Activated T-helper 2 cell treated with anti-CD3 and anti-CD28 coated beads, Interferon-gamma antibody, Interleukin-2, Interleukin-4, amounts not matched to agents 10 μg/mL and 5 μg/mL and 100 μg/mL, durations not matched to agents 14 hours and 24 hours and 36 hours (primary cell): ENCODE measurements at regions of chr16 and their contacts with region 1.

Region 1: GRCh38 chr16:67806428-67807147 is at the starts of genes RANBP10 and TSNAXIP1:
- DNase-seq: peak; percentile 97
- H3K4me3 Mint-ChIP-seq: peak within 1 kb of the TSS; percentile 95
- H3K27ac Mint-ChIP-seq: peak within 1 kb of the TSS; percentile 94
- H3K4me1 Mint-ChIP-seq: peaks cover 32% of the 10 kb centered on the region
- H3K27me3 Mint-ChIP-seq: no peaks in the 10 kb centered on the region
- total RNA-seq, gene RANBP10: 16.5 and 17.3 TPM in 2 replicates
- total RNA-seq, gene TSNAXIP1: 0.51 and 1.0 TPM in 2 replicates

Region 2: GRCh38 chr16:67480833-67481560 is 325.6 kb before region 1 on chr16 and contains the start of gene ATP6V0D1:
- intact Hi-C with region 1: loop called (anchors 1 kb)
- DNase-seq: peak; percentile 99
- H3K4me3 Mint-ChIP-seq: peak within 1 kb of the TSS; percentile 99
- H3K27ac Mint-ChIP-seq: peak within 1 kb of the TSS; percentile 98
- H3K4me1 Mint-ChIP-seq: peaks cover 23% of the 10 kb centered on the region
- H3K27me3 Mint-ChIP-seq: no peaks in the 10 kb centered on the region
- total RNA-seq, gene ATP6V0D1: 31.5 and 33.9 TPM in 2 replicates

Region 3: GRCh38 chr16:67561824-67562525 is 244.6 kb before region 1 on chr16:
- intact Hi-C with region 1: loop called (anchors 1 kb)
- DNase-seq: peak; percentile 99
- H3K4me3 Mint-ChIP-seq: peak overlapping the region; percentile 83
- H3K27ac Mint-ChIP-seq: peak overlapping the region; percentile 90
- H3K4me1 Mint-ChIP-seq: peaks cover 32% of the 10 kb centered on the region
- H3K27me3 Mint-ChIP-seq: no peaks in the 10 kb centered on the region

Region 4: GRCh38 chr16:67719048-67719777 is 87.4 kb before region 1 on chr16 and contains the start of gene GFOD2:
- intact Hi-C with region 1: loop called (anchors 5 kb)
- DNase-seq: peak; percentile 96
- H3K4me3 Mint-ChIP-seq: peak within 1 kb of the TSS; percentile 88
- H3K27ac Mint-ChIP-seq: peak within 1 kb of the TSS; percentile 92
- H3K4me1 Mint-ChIP-seq: peaks cover 26% of the 10 kb centered on the region
- H3K27me3 Mint-ChIP-seq: no peaks in the 10 kb centered on the region
- total RNA-seq, gene GFOD2: 17.0 and 18.3 TPM in 2 replicates

Region 5: GRCh38 chr16:67750466-67750865 is 56.1 kb before region 1 on chr16:
- intact Hi-C with region 1: no loop called
- DNase-seq: no peak
- H3K4me3 Mint-ChIP-seq: no peak overlapping the region
- H3K27ac Mint-ChIP-seq: peak overlapping the region; percentile 22
- H3K4me1 Mint-ChIP-seq: peaks cover 3% of the 10 kb centered on the region
- H3K27me3 Mint-ChIP-seq: no peaks in the 10 kb centered on the region

Region 6: GRCh38 chr16:67841764-67842508 is 35.3 kb after region 1 on chr16 and contains the start of gene THAP11:
- intact Hi-C with region 1: loop called (anchors 1 kb)
- DNase-seq: peak; percentile 92
- H3K4me3 Mint-ChIP-seq: peak within 1 kb of the TSS; percentile 89
- H3K27ac Mint-ChIP-seq: peak within 1 kb of the TSS; percentile 94
- H3K4me1 Mint-ChIP-seq: peaks cover 29% of the 10 kb centered on the region
- H3K27me3 Mint-ChIP-seq: no peaks in the 10 kb centered on the region
- total RNA-seq, gene THAP11: 43.0 and 45.1 TPM in 2 replicates

Region 7: GRCh38 chr16:67872786-67873537 is 66.4 kb after region 1 on chr16 and contains the start of gene EDC4:
- intact Hi-C with region 1: no loop called
- DNase-seq: peak; percentile 85
- H3K4me3 Mint-ChIP-seq: peak within 1 kb of the TSS; percentile 83
- H3K27ac Mint-ChIP-seq: peak within 1 kb of the TSS; percentile 89
- H3K4me1 Mint-ChIP-seq: peaks cover 21% of the 10 kb centered on the region
- H3K27me3 Mint-ChIP-seq: no peaks in the 10 kb centered on the region
- total RNA-seq, gene EDC4: 102 and 105 TPM in 2 replicates